Activated CD4-positive, alpha-beta T cell treated with anti-CD3 and anti-CD28 coated beads, Interleukin-2, amount 10 ng/mL, durations not matched to agents 7 days and 5 days (primary cell): ENCODE measurements at regions of chr14 and their contacts with region 1.

Region 1: DNA sequence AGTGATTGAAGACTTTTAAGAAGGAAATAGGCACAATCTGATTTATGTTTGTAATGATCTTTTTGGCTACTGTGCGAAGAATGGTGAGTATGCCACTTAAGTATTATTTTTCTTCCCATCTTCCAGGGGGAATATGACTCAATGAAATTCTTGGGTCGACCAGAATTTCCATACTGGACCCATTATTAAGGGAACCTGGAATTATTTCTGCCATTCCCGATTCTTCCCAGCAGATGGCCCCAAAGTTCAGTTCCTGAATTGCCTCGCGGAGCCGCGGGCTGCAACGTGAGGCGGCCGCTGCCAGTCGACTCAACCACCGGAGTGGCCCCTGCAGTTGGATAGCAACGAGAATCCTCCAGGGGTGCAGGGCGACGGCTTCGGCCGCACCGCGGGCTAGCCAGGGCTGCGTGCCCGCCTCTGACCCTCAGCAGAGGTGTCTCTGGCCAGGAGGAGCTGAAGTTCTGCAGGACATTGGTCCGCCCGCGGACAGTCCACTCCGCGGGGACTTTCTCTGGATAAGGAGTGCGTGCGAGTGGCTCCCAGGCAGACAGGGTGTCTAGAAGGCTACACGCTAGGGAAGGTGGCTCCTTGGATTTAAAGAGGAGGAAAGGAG is 628 bp upstream of the TSHR start:
- DNase-seq: peak; percentile 78
- H3K4me3 Mint-ChIP-seq: peak overlapping the region; percentile 83
- H3K27ac Mint-ChIP-seq: peak overlapping the region; percentile 93
- H3K4me1 Mint-ChIP-seq: peaks cover 53% of the 10 kb centered on the region
- H3K27me3 Mint-ChIP-seq: peaks cover 37% of the 10 kb centered on the region

Region 2: GRCh38 chr14:80941241-80942182 is 13.3 kb before region 1 on chr14 and contains the start of gene CEP128:
- CTCF ChIA-PET with region 1: interaction called, 19 read pairs
- POLR2A ChIA-PET with region 1: interaction called, 3 read pairs
- DNase-seq: peak; percentile 91
- H3K4me3 Mint-ChIP-seq: peak within 1 kb of the TSS; percentile 91
- H3K27ac Mint-ChIP-seq: peak within 1 kb of the TSS; percentile 87
- H3K4me1 Mint-ChIP-seq: peaks cover 37% of the 10 kb centered on the region
- H3K27me3 Mint-ChIP-seq: no peaks in the 10 kb centered on the region
- total RNA-seq, gene CEP128: 27.4 to 35.8 TPM

Region 3: DNA sequence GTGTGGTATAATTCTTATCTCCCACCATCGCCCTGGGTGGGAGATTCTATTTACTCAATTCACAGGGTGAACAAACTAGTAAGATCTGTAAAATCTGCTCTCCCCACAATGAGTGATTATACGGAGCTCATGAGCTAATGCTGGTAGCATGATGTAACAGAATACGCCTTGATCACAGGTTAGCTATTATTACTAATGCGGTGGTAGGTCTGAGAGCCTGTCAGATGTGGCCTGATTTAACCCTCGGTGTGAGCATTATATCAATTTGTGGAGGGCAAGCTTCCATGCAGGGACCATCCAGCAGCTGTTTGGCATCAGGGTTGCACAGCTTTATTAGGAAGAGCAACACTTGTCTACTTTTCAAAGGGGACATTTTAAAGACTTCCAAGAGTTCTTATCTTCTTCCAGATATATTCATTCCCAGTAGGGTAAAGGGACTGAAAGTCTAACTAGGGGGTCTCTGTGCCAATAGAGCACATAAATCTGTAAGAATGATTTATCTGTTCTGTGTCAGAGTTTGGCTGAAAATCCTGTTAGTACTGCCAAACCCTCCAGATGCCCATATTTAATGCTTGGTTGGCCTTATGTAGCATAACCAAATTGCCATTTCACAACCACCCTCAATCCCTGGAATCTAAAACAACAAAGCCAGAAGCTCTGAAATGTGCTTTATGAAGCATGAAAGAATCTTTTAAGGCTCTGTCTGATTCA is 19.3 kb after region 1 on chr14:
- CTCF ChIA-PET with region 1: interaction called, 16 read pairs
- POLR2A ChIA-PET with region 1: interaction called, 3 read pairs
- DNase-seq: no peak
- H3K4me3 Mint-ChIP-seq: no peak overlapping the region
- H3K27ac Mint-ChIP-seq: peak overlapping the region; percentile 67
- H3K4me1 Mint-ChIP-seq: peaks cover 40% of the 10 kb centered on the region
- H3K27me3 Mint-ChIP-seq: peaks cover 29% of the 10 kb centered on the region

Region 4: DNA sequence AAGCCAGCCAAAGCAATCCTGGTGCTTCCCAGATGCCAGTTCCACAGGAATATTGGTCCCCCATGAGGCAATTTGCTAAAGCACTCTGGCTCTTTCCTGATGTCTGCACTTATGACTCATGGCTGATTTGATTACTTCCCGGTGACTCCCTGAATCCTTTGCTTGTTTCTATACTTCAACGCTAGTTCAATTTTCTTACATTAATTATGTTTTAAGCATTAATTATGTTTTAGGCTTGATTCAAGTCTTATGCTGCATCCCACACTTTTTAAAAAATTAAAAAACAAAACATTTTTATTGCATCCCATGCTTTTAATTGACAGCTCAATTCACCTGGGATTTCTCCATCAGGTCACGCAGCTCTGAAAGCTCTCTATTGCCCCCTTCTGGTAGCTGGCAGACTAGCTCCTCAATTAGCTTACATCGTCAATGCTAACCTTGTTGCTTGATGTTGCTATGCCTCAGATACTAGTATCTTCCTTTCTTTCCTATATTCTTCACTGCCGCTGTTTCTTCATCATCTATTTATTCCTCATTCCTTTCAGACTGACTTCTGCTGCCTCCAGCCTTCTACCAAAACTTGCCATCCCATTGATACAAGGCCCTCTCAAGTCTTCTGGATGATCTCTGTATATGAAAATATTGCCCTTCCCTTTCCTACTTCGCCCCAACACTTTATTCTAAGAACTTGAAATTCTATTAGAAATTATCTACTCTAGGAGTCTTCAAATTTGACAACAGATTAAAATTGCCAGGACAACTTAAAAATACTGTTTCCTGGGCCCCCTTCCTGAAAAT is 32.6 kb after region 1 on chr14:
- CTCF ChIA-PET with region 1: interaction called, 32 read pairs
- POLR2A ChIA-PET with region 1: interaction called, 6 read pairs
- DNase-seq: peak; percentile 79
- H3K4me3 Mint-ChIP-seq: no peak overlapping the region
- H3K27ac Mint-ChIP-seq: no peak overlapping the region
- H3K4me1 Mint-ChIP-seq: peaks cover 15% of the 10 kb centered on the region
- H3K27me3 Mint-ChIP-seq: peaks cover 6% of the 10 kb centered on the region